MCF 10A (cell line): ENCODE measurements at regions of chr4 and their contacts with region 1.

Region 1: GRCh38 chr4:107183155-107183774 is 147.2 kb upstream of the DKK2 start:
- DNase-seq: peak; percentile 78
- H3K4me3 Mint-ChIP-seq: no peak overlapping the region
- H3K27ac Mint-ChIP-seq: no peak overlapping the region
- H3K4me1 Mint-ChIP-seq: no peaks in the 10 kb centered on the region
- H3K27me3 Mint-ChIP-seq: no peaks in the 10 kb centered on the region
- CTCF ChIP-seq: peak; percentile 79

Region 2: GRCh38 chr4:105831189-105831588 is 1352.1 kb before region 1 on chr4:
- CTCF ChIA-PET with region 1: no interaction called
- POLR2A ChIA-PET with region 1: no interaction called
- intact Hi-C with region 1: no loop called
- DNase-seq: no peak
- H3K4me3 Mint-ChIP-seq: no peak overlapping the region
- H3K27ac Mint-ChIP-seq: no peak overlapping the region
- H3K4me1 Mint-ChIP-seq: no peaks in the 10 kb centered on the region
- H3K27me3 Mint-ChIP-seq: no peaks in the 10 kb centered on the region
- CTCF ChIP-seq: no peak

Region 3: GRCh38 chr4:106369456-106370060 is 813.7 kb before region 1 on chr4:
- CTCF ChIA-PET with region 1: interaction called, 8 read pairs
- POLR2A ChIA-PET with region 1: no interaction called
- intact Hi-C with region 1: loop called (anchors 5 kb)
- DNase-seq: peak; percentile 70
- H3K4me3 Mint-ChIP-seq: no peak overlapping the region
- H3K27ac Mint-ChIP-seq: no peak overlapping the region
- H3K4me1 Mint-ChIP-seq: peaks cover 12% of the 10 kb centered on the region
- H3K27me3 Mint-ChIP-seq: no peaks in the 10 kb centered on the region
- CTCF ChIP-seq: peak; percentile 74

Region 4: DNA sequence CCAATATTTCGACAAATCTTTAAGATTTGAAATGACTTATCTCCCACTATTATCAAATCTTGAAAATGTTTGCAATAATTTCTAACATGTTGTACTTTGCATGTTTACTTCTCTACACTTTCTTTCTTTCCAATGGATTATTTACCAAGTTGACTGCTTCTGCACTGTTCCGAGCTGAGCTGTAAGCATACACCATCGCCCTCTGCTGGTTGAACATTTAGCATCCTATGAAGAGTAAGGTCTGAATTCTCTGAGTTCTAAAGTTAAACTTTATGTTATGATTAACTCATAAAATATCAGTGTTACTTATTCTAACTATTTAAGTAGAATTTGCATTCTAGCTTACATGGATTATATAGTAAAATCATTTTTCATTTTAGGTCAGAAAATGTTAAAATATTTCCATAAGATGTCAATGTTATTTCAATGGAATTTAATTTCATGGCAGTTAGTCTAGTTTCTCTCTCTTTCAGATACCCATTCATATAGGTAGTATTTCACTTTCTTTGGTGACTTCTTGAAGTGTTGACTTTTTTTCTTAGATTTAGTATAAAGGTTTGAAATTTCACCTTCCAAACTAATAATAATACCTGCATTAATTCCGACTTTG is 284.5 kb before region 1 on chr4:
- CTCF ChIA-PET with region 1: interaction called, 3 read pairs
- POLR2A ChIA-PET with region 1: no interaction called
- intact Hi-C with region 1: loop called (anchors 2 kb)
- DNase-seq: peak; percentile 71
- H3K4me3 Mint-ChIP-seq: no peak overlapping the region
- H3K27ac Mint-ChIP-seq: no peak overlapping the region
- H3K4me1 Mint-ChIP-seq: no peaks in the 10 kb centered on the region
- H3K27me3 Mint-ChIP-seq: no peaks in the 10 kb centered on the region
- CTCF ChIP-seq: peak; percentile 72

Region 5: DNA sequence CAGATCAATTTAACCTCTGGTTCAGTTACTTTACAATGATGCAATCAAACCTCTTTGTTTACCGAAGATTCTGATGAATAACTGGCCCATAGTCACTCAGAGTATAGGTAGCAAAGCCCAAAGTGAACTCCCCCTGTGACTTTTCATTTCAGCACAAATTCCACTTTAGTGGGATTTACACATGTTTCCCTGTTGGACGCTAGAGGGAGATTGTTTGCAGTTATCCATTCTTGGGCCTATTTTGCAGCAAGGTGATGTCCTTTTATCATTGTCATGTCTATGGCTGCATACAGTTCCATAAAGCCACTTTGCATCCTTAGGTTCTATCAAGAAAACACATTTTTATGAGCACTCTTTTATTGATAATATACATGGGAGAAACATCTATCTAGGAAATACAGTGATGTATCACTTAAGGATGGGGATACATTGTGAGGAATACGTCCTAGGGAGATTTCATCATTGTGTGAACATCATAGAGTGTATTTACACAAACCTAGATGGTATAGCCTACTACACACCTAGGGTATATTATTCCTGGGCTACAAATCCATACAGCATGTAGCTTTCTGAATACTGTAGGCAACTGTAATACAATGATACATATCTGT is 132.6 kb before region 1 on chr4:
- CTCF ChIA-PET with region 1: interaction called, 24 read pairs
- POLR2A ChIA-PET with region 1: interaction called, 4 read pairs
- intact Hi-C with region 1: loop called (anchors 1 kb)
- DNase-seq: peak; percentile 38
- H3K4me3 Mint-ChIP-seq: no peak overlapping the region
- H3K27ac Mint-ChIP-seq: no peak overlapping the region
- H3K4me1 Mint-ChIP-seq: no peaks in the 10 kb centered on the region
- H3K27me3 Mint-ChIP-seq: no peaks in the 10 kb centered on the region
- CTCF ChIP-seq: peak; percentile 59

Region 6: DNA sequence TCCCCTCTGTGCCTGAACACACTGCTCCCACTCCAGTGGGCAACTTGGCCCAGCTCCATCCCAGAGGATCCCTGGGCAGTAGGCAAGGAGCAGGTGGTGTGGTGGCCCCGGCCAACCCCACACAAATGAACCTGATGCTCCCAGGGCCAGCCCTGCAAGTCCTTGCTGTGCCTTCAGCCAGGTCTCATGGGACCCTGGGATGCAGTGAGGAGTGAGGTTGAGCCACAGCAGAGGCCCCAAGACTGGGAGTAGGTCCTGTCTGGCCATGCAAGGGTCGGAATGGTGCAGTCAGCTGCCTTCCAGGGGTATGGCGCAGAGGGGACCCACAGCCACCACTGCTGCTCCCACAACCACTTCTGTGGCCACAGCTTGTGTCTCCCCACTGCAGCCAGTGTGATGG is 87.3 kb after region 1 on chr4:
- CTCF ChIA-PET with region 1: no interaction called
- POLR2A ChIA-PET with region 1: no interaction called
- intact Hi-C with region 1: no loop called
- DNase-seq: no peak
- H3K4me3 Mint-ChIP-seq: no peak overlapping the region
- H3K27ac Mint-ChIP-seq: no peak overlapping the region
- H3K4me1 Mint-ChIP-seq: no peaks in the 10 kb centered on the region
- H3K27me3 Mint-ChIP-seq: no peaks in the 10 kb centered on the region
- CTCF ChIP-seq: no peak

Region 7: DNA sequence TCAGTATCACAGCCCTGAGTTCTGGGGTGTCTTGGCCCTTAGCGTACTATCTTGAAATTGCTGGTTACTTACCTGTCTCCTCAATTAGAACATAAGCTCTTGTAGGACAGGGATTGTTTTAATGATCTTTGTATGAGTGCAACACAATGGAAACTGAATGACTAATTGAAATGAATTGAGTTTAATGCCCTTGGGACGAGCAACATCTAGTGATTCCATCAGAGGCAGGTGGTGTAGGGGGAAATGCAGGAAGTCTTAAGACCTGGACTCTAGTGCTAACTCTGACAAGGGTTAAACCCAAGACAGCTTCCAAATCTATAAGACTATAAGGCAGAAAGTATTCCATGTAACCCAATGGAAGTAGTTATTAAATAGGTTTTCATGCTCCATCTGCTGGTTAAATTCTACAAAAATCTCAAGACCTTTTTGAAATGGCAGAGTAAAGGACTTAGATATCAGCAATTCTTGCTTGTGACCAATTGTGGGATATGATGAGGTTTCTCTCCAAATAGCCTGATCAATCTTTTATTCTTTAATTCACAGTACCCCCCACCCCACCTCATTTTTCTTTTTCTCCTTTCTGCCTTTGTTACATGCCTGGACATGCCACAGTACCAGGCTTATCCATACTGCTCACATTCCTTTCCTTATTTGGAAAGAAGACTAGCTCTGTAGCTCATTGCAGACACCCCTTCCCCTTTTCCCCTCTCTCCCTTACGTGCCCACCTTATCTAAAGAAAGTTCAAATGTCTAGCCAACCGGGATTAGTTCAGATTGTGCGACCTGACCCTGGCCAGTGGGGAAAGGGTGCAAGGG is 196.0 kb after region 1 on chr4:
- CTCF ChIA-PET with region 1: interaction called, 6 read pairs
- POLR2A ChIA-PET with region 1: no interaction called
- intact Hi-C with region 1: loop called (anchors 1 kb)
- DNase-seq: peak; percentile 24
- H3K4me3 Mint-ChIP-seq: no peak overlapping the region
- H3K27ac Mint-ChIP-seq: peak overlapping the region; percentile 96
- H3K4me1 Mint-ChIP-seq: peaks cover 17% of the 10 kb centered on the region
- H3K27me3 Mint-ChIP-seq: no peaks in the 10 kb centered on the region
- CTCF ChIP-seq: peak; percentile 21

Region 8: DNA sequence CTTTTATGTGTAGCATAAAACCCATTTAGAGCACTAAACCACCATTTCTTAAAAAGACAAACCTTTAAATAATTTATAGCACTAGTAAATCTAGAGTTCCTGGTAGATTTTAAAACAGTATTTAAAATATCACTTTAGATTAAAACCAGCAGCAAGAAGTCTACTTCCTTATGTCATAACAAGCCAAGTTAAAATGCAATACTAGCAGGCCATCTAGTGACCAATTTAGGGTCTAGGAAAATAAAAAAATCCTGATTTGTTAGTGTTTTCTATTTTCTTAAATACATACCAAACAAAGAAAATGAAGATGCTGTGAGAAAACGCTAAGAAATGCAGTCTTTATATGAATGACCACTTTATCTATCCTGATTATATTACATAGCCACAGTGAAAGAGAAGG is 482.9 kb after region 1 on chr4:
- CTCF ChIA-PET with region 1: interaction called, 3 read pairs
- POLR2A ChIA-PET with region 1: no interaction called
- intact Hi-C with region 1: loop called (anchors 5 kb)
- DNase-seq: peak; percentile 8
- H3K4me3 Mint-ChIP-seq: no peak overlapping the region
- H3K27ac Mint-ChIP-seq: peak overlapping the region; percentile 19
- H3K4me1 Mint-ChIP-seq: no peaks in the 10 kb centered on the region
- H3K27me3 Mint-ChIP-seq: no peaks in the 10 kb centered on the region
- CTCF ChIP-seq: peak; percentile 22